ENCODE measurements at regions of chr16 and their contacts with region 1.

Region 1: GRCh38 chr16:68644715-68645493 is at the start of gene CDH3:
- DNase-seq: peak; percentile 97
- H3K4me3 ChIP-seq: peak within 1 kb of the TSS; percentile 82 to 94 (median 89)
- H3K27ac ChIP-seq: peak within 1 kb of the TSS; percentile 87
- H3K4me1 ChIP-seq: peaks cover 59% of the 10 kb centered on the region
- H3K27me3 ChIP-seq: no peaks in the 10 kb centered on the region
- CTCF ChIP-seq: peak in 1 of 2 donors; percentile 31
- total RNA-seq, gene CDH3: 628 to 995 TPM

Region 2: DNA sequence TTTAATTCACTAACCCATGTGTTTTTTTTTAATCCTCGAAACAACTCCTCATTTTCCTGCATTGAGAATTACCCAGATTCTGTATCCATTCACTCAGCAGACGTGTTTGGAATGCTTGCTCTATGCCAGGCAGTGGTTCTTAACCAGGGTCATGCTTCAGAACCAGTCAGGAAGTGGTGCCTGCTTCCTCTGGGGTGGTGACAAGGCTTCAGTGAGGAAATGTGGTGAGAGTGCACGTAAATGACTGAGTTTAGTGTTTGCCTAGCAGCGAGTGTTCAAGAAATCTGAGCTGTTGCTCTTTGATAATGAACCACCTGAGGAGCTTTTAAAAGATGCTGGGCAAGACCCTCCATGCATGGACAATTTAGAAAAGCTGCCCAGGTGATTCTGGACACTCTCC is 96.0 kb before region 1 on chr16:
- CTCF ChIA-PET with region 1: no interaction called
- dilution Hi-C with region 1: no loop called
- in situ Hi-C with region 1: no loop called
- intact Hi-C with region 1: no loop called
- DNase-seq: no peak
- H3K4me3 ChIP-seq: no peak overlapping the region
- H3K27ac ChIP-seq: no peak overlapping the region
- H3K4me1 ChIP-seq: no peaks in the 10 kb centered on the region
- H3K27me3 ChIP-seq: no peaks in the 10 kb centered on the region
- CTCF ChIP-seq: no peak

Region 3: DNA sequence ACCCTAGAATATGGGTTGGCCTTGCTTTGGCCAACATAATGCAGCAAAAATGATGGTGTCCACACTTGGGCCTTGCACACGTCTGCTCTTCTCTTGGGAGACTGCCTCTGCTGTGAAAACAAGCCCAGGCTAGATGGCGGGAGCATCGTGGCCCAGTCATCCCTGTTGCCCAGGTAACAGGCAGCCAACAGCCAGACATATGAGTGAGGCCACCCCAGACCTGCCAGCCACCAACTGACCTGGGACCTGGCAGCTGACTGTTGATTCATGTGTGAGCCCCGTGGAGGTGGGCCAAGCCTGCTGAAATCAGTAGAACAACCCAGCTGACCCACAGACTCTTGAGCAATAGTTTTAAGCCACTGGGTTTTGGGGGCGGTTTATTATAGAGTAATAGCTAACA is 39.2 kb before region 1 on chr16:
- CTCF ChIA-PET with region 1: no interaction called
- dilution Hi-C with region 1: no loop called
- in situ Hi-C with region 1: no loop called
- intact Hi-C with region 1: loop called (anchors 1 kb)
- DNase-seq: peak; percentile 99
- H3K4me3 ChIP-seq: no peak overlapping the region
- H3K27ac ChIP-seq: peak overlapping the region; percentile 83
- H3K4me1 ChIP-seq: peaks cover 15% of the 10 kb centered on the region
- H3K27me3 ChIP-seq: no peaks in the 10 kb centered on the region
- CTCF ChIP-seq: no peak

Region 4: GRCh38 chr16:68658258-68659008 is 13.5 kb after region 1 on chr16:
- CTCF ChIA-PET with region 1: no interaction called
- dilution Hi-C with region 1: no loop called
- in situ Hi-C with region 1: no loop called
- intact Hi-C with region 1: loop called (anchors 1 kb)
- DNase-seq: peak; percentile 99
- H3K4me3 ChIP-seq: no peak overlapping the region
- H3K27ac ChIP-seq: peak overlapping the region; percentile 99
- H3K4me1 ChIP-seq: peaks cover 64% of the 10 kb centered on the region
- H3K27me3 ChIP-seq: no peaks in the 10 kb centered on the region
- CTCF ChIP-seq: no peak

Region 5: DNA sequence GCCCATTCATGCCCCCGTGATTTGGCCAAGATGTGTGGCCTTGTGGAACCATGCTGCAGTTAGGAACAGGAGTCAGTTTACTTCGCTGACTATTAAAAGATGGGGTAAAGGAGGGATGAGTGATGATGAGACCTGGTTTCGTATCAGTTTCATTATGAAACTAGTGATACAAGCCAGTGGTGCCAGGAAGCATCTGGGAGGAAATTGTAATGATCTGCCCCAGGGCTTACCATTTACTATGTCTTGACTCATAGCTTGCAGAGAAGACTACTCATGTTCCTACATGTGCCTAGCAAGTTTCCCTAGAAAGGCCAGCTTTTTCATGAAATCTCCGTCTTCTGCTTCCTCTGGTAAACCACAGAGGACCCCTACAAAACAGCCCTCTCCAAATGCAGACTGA is 23.4 kb after region 1 on chr16:
- CTCF ChIA-PET with region 1: interaction called, 3 read pairs
- dilution Hi-C with region 1: no loop called
- in situ Hi-C with region 1: no loop called
- intact Hi-C with region 1: loop called (anchors 1 kb)
- DNase-seq: peak; percentile 100
- H3K4me3 ChIP-seq: peak overlapping the region in 1 of 3 experiments; percentile 12
- H3K27ac ChIP-seq: peak overlapping the region; percentile 99
- H3K4me1 ChIP-seq: peaks cover 65% of the 10 kb centered on the region
- H3K27me3 ChIP-seq: no peaks in the 10 kb centered on the region
- CTCF ChIP-seq: no peak

Region 6: GRCh38 chr16:68676113-68676860 is 31.4 kb after region 1 on chr16:
- CTCF ChIA-PET with region 1: no interaction called
- dilution Hi-C with region 1: no loop called
- in situ Hi-C with region 1: no loop called
- intact Hi-C with region 1: loop called (anchors 5 kb)
- DNase-seq: peak; percentile 88
- H3K4me3 ChIP-seq: no peak overlapping the region
- H3K27ac ChIP-seq: peak overlapping the region; percentile 78
- H3K4me1 ChIP-seq: peaks cover 17% of the 10 kb centered on the region
- H3K27me3 ChIP-seq: no peaks in the 10 kb centered on the region
- CTCF ChIP-seq: no peak

Region 7: GRCh38 chr16:68737046-68737729 is 92.3 kb after region 1 on chr16 and contains the start of gene CDH1:
- CTCF ChIA-PET with region 1: no interaction called
- dilution Hi-C with region 1: no loop called
- in situ Hi-C with region 1: no loop called
- intact Hi-C with region 1: loop called (anchors 5 kb)
- DNase-seq: peak; percentile 89
- H3K4me3 ChIP-seq: peak within 1 kb of the TSS; percentile 88 to 97 (median 93)
- H3K27ac ChIP-seq: peak within 1 kb of the TSS; percentile 97
- H3K4me1 ChIP-seq: peaks cover 38% of the 10 kb centered on the region
- H3K27me3 ChIP-seq: no peaks in the 10 kb centered on the region
- CTCF ChIP-seq: no peak
- total RNA-seq, gene CDH1: 355 to 369 TPM

Measured in mammary epithelial cell (primary cell).